ENCODE measurements at regions of chr11 and their contacts with region 1.

Region 1: GRCh38 chr11:93741094-93741881 is at the starts of genes C11orf54 and TAF1D:
- DNase-seq: peak; percentile 98
- H3K4me3 Mint-ChIP-seq: peak within 1 kb of the TSS; percentile 99
- H3K27ac Mint-ChIP-seq: peak within 1 kb of the TSS; percentile 98
- H3K4me1 Mint-ChIP-seq: peaks cover 50% of the 10 kb centered on the region
- H3K27me3 Mint-ChIP-seq: no peaks in the 10 kb centered on the region
- total RNA-seq, gene C11orf54: 24.4 to 24.6 TPM
- total RNA-seq, gene TAF1D: 183 to 184 TPM

Region 2: DNA sequence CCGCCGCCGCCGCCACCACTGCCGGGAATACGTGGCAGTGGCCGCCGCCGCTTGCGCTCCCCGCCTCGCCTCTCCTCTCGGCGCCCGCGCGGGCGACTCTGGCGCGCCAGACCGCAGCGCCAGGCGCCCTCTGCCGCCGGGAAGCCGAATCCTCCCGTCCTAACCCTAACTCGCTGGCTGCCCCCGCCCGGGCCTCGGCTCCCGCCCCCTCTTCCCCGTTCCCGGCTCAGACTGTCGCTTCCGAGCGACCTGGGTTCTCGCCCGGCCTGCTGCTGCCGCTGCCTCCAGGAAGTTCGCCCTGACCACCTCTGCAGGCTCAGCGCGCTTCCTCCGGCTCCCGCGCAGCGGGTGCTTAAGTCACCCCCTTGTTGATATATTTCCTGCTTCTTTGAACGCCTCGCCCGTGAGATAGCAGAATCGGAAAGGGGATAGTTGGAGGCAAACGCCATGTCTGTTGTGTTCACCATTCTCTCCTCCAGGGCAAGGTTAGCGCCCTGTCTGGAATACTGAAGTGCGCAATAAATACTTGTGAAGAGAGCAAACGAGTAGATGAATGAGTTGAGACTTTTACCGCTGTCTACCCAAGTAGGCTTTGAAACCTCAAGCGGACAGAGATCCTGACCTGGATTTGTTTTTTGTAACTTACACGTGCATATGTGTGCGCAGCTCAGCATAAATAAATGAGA is 197.9 kb before region 1 on chr11 and contains the start of gene SMCO4:
- CTCF ChIA-PET with region 1: no interaction called
- POLR2A ChIA-PET with region 1: interaction called, 12 read pairs
- DNase-seq: peak; percentile 80
- H3K4me3 Mint-ChIP-seq: peak within 1 kb of the TSS; percentile 87
- H3K27ac Mint-ChIP-seq: peak within 1 kb of the TSS; percentile 85
- H3K4me1 Mint-ChIP-seq: peaks cover 36% of the 10 kb centered on the region
- H3K27me3 Mint-ChIP-seq: peaks cover 7% of the 10 kb centered on the region
- total RNA-seq, gene SMCO4: 55.3 to 60.0 TPM

Region 3: DNA sequence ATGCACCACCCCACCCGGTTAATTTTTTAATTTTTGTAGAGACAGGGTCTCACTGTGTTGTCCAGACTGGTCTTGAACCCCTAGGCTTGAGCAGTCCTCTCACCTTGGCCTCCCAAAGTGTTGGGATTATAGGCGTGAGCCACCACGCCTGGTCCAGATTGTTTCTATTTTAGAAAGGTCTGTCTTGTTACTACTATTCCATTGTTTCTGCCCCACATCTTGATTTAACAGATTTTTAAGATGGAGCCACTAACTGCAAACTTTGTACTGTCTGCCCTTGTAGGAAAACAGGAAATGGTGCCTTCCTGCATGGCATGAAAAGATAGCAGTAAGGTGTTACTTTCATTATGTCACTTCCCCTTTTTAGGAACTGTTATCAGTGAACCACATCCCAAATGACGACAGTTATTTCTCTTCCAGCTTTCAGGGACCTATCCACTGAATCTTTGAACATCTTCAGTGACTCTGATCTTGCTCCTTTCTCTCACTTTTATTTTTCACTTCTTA is 23.2 kb before region 1 on chr11:
- CTCF ChIA-PET with region 1: interaction called, 5 read pairs
- POLR2A ChIA-PET with region 1: interaction called, 29 read pairs
- DNase-seq: no peak
- H3K4me3 Mint-ChIP-seq: peak overlapping the region; percentile 14
- H3K27ac Mint-ChIP-seq: peak overlapping the region; percentile 83
- H3K4me1 Mint-ChIP-seq: peaks cover 31% of the 10 kb centered on the region
- H3K27me3 Mint-ChIP-seq: no peaks in the 10 kb centered on the region

Region 4: DNA sequence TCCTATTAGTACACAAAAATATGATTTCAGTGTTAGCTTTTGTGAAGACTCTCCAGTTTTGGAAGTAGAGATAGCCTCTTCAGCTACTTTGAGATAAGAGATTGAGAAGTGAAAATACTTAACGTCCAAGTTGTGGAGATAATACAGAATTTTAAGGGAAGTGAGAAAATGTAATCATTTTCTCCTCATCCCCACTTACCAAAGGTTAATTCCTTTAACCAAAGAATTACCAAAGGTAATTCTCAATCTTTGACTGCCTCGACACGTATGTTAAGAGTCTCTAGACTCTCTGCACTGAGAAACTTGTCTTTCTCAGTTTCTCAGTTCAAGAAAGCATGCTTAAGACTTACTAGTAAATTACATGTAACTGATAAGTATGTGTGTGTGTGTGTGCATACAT is 15.5 kb after region 1 on chr11:
- CTCF ChIA-PET with region 1: interaction called, 3 read pairs
- POLR2A ChIA-PET with region 1: interaction called, 19 read pairs
- DNase-seq: no peak
- H3K4me3 Mint-ChIP-seq: no peak overlapping the region
- H3K27ac Mint-ChIP-seq: no peak overlapping the region
- H3K4me1 Mint-ChIP-seq: no peaks in the 10 kb centered on the region
- H3K27me3 Mint-ChIP-seq: no peaks in the 10 kb centered on the region

Region 5: DNA sequence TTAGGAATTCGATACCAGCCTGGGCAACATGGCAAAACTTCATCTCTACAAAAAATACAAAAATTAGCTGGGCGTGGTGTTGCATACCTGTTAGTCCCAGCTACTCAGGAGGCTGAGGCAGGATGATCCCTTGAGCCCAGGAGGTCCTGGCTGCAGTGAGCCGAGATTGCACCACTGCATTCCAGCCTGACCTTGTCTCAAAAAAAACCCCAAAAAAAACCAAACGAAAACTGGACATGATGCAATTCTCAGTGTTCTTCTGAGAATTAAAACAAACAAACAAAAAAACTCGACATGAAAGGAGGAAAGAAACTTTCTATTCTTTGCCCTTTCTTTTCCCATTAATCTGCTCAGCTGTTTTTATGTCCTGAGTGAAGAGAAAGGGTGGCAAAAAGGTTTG is 50.2 kb after region 1 on chr11:
- CTCF ChIA-PET with region 1: interaction called, 3 read pairs
- POLR2A ChIA-PET with region 1: interaction called, 325 read pairs
- DNase-seq: no peak
- H3K4me3 Mint-ChIP-seq: no peak overlapping the region
- H3K27ac Mint-ChIP-seq: no peak overlapping the region
- H3K4me1 Mint-ChIP-seq: peaks cover 25% of the 10 kb centered on the region
- H3K27me3 Mint-ChIP-seq: no peaks in the 10 kb centered on the region